Activated CD4-positive, alpha-beta T cell treated with anti-CD3 and anti-CD28 coated beads for 36 hours (primary cell): ENCODE measurements at regions of chr11 and their contacts with region 1.

Region 1: GRCh38 chr11:124800226-124800929 is at the start of gene MSANTD2:
- DNase-seq: peak; percentile 88
- ATAC-seq: peak; percentile 89
- H3K4me3 Mint-ChIP-seq: peak within 1 kb of the TSS; percentile 83
- H3K27ac Mint-ChIP-seq: peak within 1 kb of the TSS; percentile 95
- H3K4me1 Mint-ChIP-seq: peaks cover 36% of the 10 kb centered on the region
- H3K27me3 Mint-ChIP-seq: no peaks in the 10 kb centered on the region
- total RNA-seq, gene MSANTD2: 6.9 to 8.6 TPM

Region 2: GRCh38 chr11:123995119-123995518 is 805.3 kb before region 1 on chr11 and contains the start of gene OR10G6:
- CTCF ChIA-PET with region 1: no interaction called
- POLR2A ChIA-PET with region 1: no interaction called
- intact Hi-C with region 1: no loop called
- DNase-seq: no peak
- ATAC-seq: no peak
- H3K4me3 Mint-ChIP-seq: no peak within 1 kb of the TSS
- H3K27ac Mint-ChIP-seq: no peak within 1 kb of the TSS
- H3K4me1 Mint-ChIP-seq: no peaks in the 10 kb centered on the region
- H3K27me3 Mint-ChIP-seq: peaks cover 2% of the 10 kb centered on the region
- total RNA-seq, gene OR10G6: not detected

Region 3: GRCh38 chr11:124114942-124115781 is 685.2 kb before region 1 on chr11 and contains the start of gene VWA5A:
- CTCF ChIA-PET with region 1: no interaction called
- POLR2A ChIA-PET with region 1: no interaction called
- intact Hi-C with region 1: loop called in 1 of 2 experiments (anchors 2 kb)
- DNase-seq: peak; percentile 90
- ATAC-seq: peak; percentile 99
- H3K4me3 Mint-ChIP-seq: peak within 1 kb of the TSS; percentile 78
- H3K27ac Mint-ChIP-seq: peak within 1 kb of the TSS; percentile 87
- H3K4me1 Mint-ChIP-seq: peaks cover 23% of the 10 kb centered on the region
- H3K27me3 Mint-ChIP-seq: peaks cover 6% of the 10 kb centered on the region
- total RNA-seq, gene VWA5A: 8.6 to 8.8 TPM

Region 4: DNA sequence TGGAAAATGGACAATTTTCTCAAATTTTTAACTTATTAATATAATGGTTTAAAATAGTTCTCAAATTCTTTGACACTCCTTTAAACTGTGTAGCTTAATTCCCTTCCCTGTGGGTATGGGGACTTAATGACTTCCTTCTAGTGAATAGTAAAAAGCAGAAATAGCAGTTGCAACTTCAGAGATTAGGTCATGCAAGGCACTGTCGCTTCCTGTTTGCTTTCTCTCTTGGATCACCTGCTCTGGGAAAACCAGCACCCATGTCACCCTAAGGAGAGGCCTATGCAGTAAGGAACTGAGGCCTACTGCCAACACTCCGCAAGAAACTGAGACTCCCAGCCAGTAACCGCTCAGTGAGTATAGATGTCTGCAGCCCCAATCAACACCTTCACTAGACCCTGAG is 194.7 kb before region 1 on chr11:
- CTCF ChIA-PET with region 1: no interaction called
- POLR2A ChIA-PET with region 1: no interaction called
- intact Hi-C with region 1: no loop called
- DNase-seq: no peak
- ATAC-seq: no peak
- H3K4me3 Mint-ChIP-seq: no peak overlapping the region
- H3K27ac Mint-ChIP-seq: no peak overlapping the region
- H3K4me1 Mint-ChIP-seq: no peaks in the 10 kb centered on the region
- H3K27me3 Mint-ChIP-seq: peaks cover under 1% of the 10 kb centered on the region

Region 5: GRCh38 chr11:124622531-124623451 is 177.6 kb before region 1 on chr11 and contains the start of gene TBRG1:
- CTCF ChIA-PET with region 1: no interaction called
- POLR2A ChIA-PET with region 1: no interaction called
- intact Hi-C with region 1: loop called in 1 of 2 experiments (anchors 1 kb)
- DNase-seq: peak; percentile 87
- ATAC-seq: peak; percentile 99
- H3K4me3 Mint-ChIP-seq: peak within 1 kb of the TSS; percentile 93
- H3K27ac Mint-ChIP-seq: peak within 1 kb of the TSS; percentile 95
- H3K4me1 Mint-ChIP-seq: peaks cover 22% of the 10 kb centered on the region
- H3K27me3 Mint-ChIP-seq: peaks cover 5% of the 10 kb centered on the region
- total RNA-seq, gene TBRG1: 29.6 to 40.6 TPM

Region 6: DNA sequence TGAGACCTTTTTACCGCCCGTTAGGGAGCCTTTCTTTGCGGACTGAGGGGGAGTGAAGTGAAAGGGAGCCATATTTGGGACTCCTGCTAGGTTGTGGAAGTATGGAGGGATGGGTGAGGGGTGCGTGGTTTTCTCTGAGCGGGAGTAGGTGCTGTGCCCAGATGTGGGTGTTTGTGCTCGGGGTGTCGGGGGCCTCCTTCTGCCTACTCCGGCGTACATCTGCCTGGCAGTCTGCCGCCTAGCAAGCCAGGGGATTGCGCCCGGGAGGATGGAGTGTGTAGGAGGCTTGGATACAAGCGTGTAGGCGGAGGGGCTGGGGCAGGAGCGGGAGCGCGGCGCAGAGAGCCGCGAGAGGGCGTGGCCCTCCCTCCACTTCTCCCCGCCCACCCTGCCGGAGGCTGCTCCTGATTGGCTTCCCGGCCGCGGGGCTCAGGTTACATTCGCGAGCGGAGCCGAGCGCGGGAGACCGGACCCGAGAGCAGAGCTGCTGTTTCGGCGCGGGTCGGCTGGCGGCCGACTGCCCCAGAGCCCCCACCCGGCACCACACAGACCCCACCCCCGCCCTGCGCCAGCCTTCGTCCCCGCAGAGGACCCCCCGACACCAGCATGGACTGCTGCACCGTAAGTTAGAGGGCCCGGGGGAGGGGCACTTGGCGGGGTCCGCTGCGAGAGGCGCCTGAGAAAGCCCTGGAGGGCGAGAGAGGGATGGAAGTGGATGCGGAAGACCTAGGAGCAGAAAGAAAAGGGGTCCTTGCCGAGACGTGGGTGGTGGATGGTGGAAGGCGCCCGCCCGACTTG is 60.7 kb before region 1 on chr11 and contains the start of gene NRGN:
- CTCF ChIA-PET with region 1: interaction called, 5 read pairs
- POLR2A ChIA-PET with region 1: no interaction called
- intact Hi-C with region 1: loop called in 1 of 2 experiments (anchors 1 kb)
- DNase-seq: peak; percentile 93
- ATAC-seq: peak; percentile 95
- H3K4me3 Mint-ChIP-seq: peak within 1 kb of the TSS; percentile 76
- H3K27ac Mint-ChIP-seq: peak within 1 kb of the TSS; percentile 17
- H3K4me1 Mint-ChIP-seq: peaks cover 9% of the 10 kb centered on the region
- H3K27me3 Mint-ChIP-seq: peaks cover 2% of the 10 kb centered on the region
- total RNA-seq, gene NRGN: 13.5 to 18.1 TPM

Region 7: GRCh38 chr11:124746621-124747243 is 53.6 kb before region 1 on chr11:
- CTCF ChIA-PET with region 1: interaction called, 5 read pairs
- POLR2A ChIA-PET with region 1: no interaction called
- intact Hi-C with region 1: loop called in 1 of 2 experiments (anchors 1 kb)
- DNase-seq: peak; percentile 88
- ATAC-seq: peak; percentile 92
- H3K4me3 Mint-ChIP-seq: peak overlapping the region; percentile 81
- H3K27ac Mint-ChIP-seq: peak overlapping the region; percentile 90
- H3K4me1 Mint-ChIP-seq: peaks cover 11% of the 10 kb centered on the region
- H3K27me3 Mint-ChIP-seq: peaks cover 2% of the 10 kb centered on the region

Region 8: GRCh38 chr11:124953753-124954589 is 153.6 kb after region 1 on chr11 and contains the start of gene CCDC15:
- CTCF ChIA-PET with region 1: no interaction called
- POLR2A ChIA-PET with region 1: no interaction called
- intact Hi-C with region 1: loop called in 1 of 2 experiments (anchors 1 kb)
- DNase-seq: peak; percentile 97
- ATAC-seq: peak; percentile 98
- H3K4me3 Mint-ChIP-seq: no peak within 1 kb of the TSS
- H3K27ac Mint-ChIP-seq: no peak within 1 kb of the TSS
- H3K4me1 Mint-ChIP-seq: peaks cover 4% of the 10 kb centered on the region
- H3K27me3 Mint-ChIP-seq: no peaks in the 10 kb centered on the region
- total RNA-seq, gene CCDC15: 5.6 to 6.7 TPM

Region 9: DNA sequence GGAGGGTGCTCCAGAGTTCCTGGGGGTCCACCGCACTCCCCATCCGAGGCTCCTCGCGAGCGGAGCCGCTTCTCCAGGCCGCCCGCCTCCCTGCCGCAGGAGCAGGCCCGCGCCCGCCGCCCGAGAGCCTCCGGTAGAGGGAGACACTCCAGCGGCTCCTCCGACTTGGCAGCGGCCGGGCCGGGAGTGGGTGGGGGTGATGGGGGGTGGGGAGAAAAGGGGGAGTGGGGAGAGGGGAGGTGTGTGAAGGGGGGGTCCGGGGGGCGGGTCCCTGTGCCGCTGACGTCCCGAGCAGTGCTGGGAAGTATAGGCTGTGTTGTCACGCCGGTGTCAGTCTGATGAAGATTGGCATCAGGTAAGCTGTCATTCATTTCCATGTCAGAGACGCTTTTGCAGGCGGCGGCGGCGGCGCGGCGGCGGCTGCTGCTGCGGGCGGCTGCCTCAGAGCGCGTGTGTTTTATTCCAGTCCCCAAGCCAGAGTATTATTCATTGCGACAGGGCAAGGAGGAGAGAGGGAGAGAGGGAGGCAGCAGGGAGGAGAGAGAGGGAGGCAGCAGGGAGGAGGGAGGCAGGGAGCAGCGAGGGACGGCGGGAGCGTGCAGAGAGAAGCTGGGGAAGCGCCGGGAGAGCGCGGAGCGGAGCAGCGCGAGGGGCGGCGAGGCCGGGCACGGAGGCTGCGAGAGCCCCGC is 364.2 kb after region 1 on chr11 and contains the start of gene PKNOX2:
- CTCF ChIA-PET with region 1: no interaction called
- POLR2A ChIA-PET with region 1: no interaction called
- intact Hi-C with region 1: no loop called
- DNase-seq: peak; percentile 83
- ATAC-seq: peak; percentile 85
- H3K4me3 Mint-ChIP-seq: peak within 1 kb of the TSS; percentile 77
- H3K27ac Mint-ChIP-seq: peak within 1 kb of the TSS; percentile 51
- H3K4me1 Mint-ChIP-seq: peaks cover 18% of the 10 kb centered on the region
- H3K27me3 Mint-ChIP-seq: peaks cover 53% of the 10 kb centered on the region
- total RNA-seq, gene PKNOX2: not detected